AG04450 (cell line): ENCODE measurements at regions of chr6 and their contacts with region 1.

Region 1: GRCh38 chr6:151323791-151324487 is 67.4 kb downstream of the ZBTB2 start:
- DNase-seq: peak; percentile 70
- H3K4me3 ChIP-seq: peak overlapping the region; percentile 14; the same call in 1 of the 2 replicates
- H3K27ac ChIP-seq: peak overlapping the region; percentile 47
- H3K27me3 ChIP-seq: no peaks in the 10 kb centered on the region
- CTCF ChIP-seq: peak; percentile 94

Region 2: GRCh38 chr6:150891888-150892485 is 432.0 kb before region 1 on chr6:
- CTCF ChIA-PET with region 1: interaction called, 178 read pairs
- POLR2A ChIA-PET with region 1: interaction called, 3 read pairs
- DNase-seq: peak; percentile 72
- H3K4me3 ChIP-seq: no peak overlapping the region
- H3K27ac ChIP-seq: no peak overlapping the region
- H3K27me3 ChIP-seq: no peaks in the 10 kb centered on the region
- CTCF ChIP-seq: peak; percentile 89

Region 3: GRCh38 chr6:151014404-151015100 is 309.4 kb before region 1 on chr6:
- CTCF ChIA-PET with region 1: interaction called, 131 read pairs
- POLR2A ChIA-PET with region 1: interaction called, 3 read pairs
- DNase-seq: no peak
- H3K4me3 ChIP-seq: no peak overlapping the region; the same call in 1 of the 2 replicates
- H3K27ac ChIP-seq: peak overlapping the region; percentile 47
- H3K27me3 ChIP-seq: no peaks in the 10 kb centered on the region
- CTCF ChIP-seq: peak; percentile 98

Region 4: DNA sequence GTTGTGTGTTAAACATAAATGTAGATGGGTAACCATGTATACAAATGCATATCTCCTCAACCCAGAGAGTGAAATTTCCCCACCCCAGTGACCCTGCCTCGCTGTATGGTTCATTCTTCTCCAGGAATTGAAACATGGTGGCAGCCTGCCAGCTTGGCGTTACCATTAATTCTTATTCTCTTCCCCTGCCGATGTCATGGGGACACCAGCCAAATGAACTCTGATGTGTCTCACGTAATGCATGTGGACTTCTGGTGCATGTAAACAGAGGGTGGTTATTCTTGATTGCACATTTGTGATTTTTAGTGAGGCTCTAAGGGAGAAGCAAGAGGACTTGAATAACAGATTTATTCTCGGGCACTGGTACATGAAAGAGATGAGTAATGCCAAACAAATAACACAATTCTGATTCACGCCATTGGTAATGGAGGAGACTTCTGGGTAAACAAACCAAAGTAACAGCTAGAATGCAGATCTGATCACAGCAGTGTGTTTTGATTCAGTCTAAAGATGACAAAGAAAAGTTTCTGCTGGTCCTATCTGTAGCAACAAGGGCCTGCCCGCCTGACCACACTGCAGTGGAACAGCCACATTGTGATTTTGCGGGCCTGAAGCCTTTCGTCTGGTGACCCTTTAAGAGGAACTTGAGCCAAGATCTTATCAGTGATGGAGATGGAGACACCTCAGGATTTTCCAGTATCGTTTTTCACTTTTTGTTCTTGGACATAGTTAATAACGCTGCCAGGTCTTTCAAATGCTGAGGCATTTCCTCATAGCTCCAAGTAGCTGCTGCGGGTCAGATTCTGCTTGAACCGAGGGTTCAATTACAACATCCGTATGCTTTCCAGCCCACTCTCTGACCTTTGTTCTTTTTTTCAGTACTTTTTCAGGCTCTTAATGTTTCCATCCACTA is 256.0 kb before region 1 on chr6:
- CTCF ChIA-PET with region 1: interaction called, 16 read pairs
- POLR2A ChIA-PET with region 1: no interaction called
- DNase-seq: peak; percentile 83
- H3K4me3 ChIP-seq: no peak overlapping the region; the same call in 1 of the 2 replicates
- H3K27ac ChIP-seq: peak overlapping the region; percentile 94
- H3K27me3 ChIP-seq: no peaks in the 10 kb centered on the region
- CTCF ChIP-seq: no peak

Region 5: GRCh38 chr6:151096255-151096612 is 227.7 kb before region 1 on chr6:
- CTCF ChIA-PET with region 1: interaction called, 12 read pairs
- POLR2A ChIA-PET with region 1: no interaction called
- DNase-seq: no peak
- H3K4me3 ChIP-seq: no peak overlapping the region
- H3K27ac ChIP-seq: no peak overlapping the region
- H3K27me3 ChIP-seq: no peaks in the 10 kb centered on the region
- CTCF ChIP-seq: no peak

Region 6: DNA sequence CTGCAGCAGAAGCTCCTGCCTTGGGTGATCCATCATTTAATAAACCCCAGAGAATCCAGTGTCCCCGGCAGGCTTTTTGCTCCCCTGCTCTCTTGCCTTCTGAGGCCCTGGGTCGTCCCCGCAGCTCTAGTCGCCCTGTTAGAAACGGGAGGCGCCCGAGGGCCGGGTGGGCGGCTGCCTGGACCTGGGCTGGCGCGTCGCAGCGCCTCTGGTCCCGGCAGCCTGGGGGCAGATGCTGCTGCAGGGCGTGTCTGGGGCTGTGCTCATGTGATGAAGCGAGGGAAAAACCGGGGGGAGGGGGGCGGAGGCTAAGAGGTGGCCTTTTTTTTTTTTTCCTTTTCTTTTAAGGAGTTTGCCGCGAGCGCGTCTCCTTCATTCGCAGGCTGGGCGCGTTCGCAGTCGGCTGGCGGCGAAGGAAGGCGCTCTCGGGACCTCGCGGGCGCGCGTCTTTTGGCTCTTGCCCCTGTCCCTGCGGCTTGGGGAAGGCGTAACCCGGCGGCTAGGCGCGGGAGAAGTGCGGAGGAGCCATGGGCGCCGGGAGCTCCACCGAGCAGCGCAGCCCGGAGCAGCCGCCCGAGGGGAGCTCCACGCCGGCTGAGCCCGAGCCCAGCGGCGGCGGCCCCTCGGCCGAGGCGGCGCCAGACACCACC is 83.8 kb before region 1 on chr6:
- CTCF ChIA-PET with region 1: interaction called, 16 read pairs
- POLR2A ChIA-PET with region 1: interaction called, 8 read pairs
- DNase-seq: no peak
- H3K4me3 ChIP-seq: peak overlapping the region; percentile 76
- H3K27ac ChIP-seq: peak overlapping the region; percentile 55
- H3K27me3 ChIP-seq: no peaks in the 10 kb centered on the region
- CTCF ChIP-seq: no peak

Region 7: GRCh38 chr6:151290877-151291721 is 32.8 kb before region 1 on chr6:
- CTCF ChIA-PET with region 1: interaction called, 11 read pairs
- POLR2A ChIA-PET with region 1: no interaction called
- DNase-seq: peak; percentile 67
- H3K4me3 ChIP-seq: no peak overlapping the region; the same call in 1 of the 2 replicates
- H3K27ac ChIP-seq: peak overlapping the region; percentile 75
- H3K27me3 ChIP-seq: no peaks in the 10 kb centered on the region
- CTCF ChIP-seq: no peak

Region 8: DNA sequence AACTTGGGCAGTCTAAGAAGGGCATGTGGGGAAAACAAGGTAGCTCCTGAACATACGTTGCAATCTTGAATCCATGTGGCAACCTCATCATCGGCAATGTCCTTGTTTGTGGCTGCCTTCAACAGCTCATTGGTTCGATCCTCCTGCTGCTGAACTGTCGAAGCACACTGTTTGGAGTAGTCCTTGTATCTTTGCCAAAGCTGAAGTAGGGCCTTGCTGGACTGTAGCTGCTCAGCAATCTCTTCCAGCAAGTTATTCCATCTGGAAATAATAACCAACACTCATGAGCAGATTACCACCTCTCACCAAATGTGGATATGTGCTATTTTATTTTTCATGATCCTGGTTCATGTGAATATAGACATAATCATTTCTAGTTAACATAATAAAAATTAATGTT is 896.8 kb after region 1 on chr6:
- CTCF ChIA-PET with region 1: no interaction called
- POLR2A ChIA-PET with region 1: no interaction called
- DNase-seq: no peak
- H3K4me3 ChIP-seq: no peak overlapping the region
- H3K27ac ChIP-seq: no peak overlapping the region
- H3K27me3 ChIP-seq: no peaks in the 10 kb centered on the region
- CTCF ChIP-seq: no peak